B cell (primary cell): ENCODE measurements at regions of chr16 and their contacts with region 1.

Region 1: DNA sequence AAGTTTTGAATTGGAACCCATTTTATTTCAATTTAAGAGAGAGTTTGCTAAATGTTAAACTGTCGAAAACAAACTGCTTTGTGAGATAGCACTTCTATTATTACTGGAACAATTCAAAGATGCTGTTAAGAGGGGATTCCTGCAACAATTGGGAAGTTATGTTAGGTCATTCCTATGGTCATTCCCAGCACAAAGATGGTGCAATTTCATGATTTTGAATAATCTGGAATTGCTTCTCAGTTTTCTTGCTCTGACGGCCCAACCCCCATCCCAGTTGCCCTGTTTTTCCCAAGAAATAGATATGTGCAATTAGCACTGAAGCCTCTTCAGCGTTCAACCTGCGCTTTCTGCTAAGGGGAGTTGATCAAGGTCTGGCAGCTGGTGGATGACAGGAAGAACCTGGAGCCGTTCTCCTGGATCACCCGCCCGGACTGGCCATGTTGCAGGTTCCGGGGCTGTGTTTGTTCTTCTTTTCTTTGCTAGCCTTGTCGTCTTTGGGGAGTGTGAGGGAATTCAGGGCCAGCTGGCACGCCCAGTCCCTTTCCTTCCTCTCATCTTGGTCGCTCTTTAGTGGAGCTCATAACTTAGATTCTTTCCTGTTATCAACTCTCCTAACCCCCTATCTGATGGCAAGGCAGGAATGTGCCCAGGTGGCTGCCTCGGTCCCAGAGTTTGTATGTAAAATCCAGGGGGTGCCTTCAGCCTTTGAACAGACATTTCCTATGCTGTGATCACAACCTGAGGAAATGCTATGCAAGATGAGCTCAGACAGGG is 29.0 kb upstream of the IRF8 start:
- DNase-seq: no peak
- ATAC-seq: no peak
- H3K4me3 ChIP-seq: peak overlapping the region in 2 of 5 experiments; percentile 3 to 28
- H3K4me3 Mint-ChIP-seq: peak overlapping the region; percentile 59
- H3K27ac ChIP-seq: peak overlapping the region; percentile 33 to 74
- H3K27ac Mint-ChIP-seq: peak overlapping the region; percentile 84
- H3K4me1 ChIP-seq: peaks cover 53 to 66% of the 10 kb centered on the region in 2 donors
- H3K4me1 Mint-ChIP-seq: peaks cover 78% of the 10 kb centered on the region
- H3K27me3 ChIP-seq: no peaks in the 10 kb centered on the region
- H3K27me3 Mint-ChIP-seq: no peaks in the 10 kb centered on the region
- CTCF ChIP-seq: no peak

Region 2: DNA sequence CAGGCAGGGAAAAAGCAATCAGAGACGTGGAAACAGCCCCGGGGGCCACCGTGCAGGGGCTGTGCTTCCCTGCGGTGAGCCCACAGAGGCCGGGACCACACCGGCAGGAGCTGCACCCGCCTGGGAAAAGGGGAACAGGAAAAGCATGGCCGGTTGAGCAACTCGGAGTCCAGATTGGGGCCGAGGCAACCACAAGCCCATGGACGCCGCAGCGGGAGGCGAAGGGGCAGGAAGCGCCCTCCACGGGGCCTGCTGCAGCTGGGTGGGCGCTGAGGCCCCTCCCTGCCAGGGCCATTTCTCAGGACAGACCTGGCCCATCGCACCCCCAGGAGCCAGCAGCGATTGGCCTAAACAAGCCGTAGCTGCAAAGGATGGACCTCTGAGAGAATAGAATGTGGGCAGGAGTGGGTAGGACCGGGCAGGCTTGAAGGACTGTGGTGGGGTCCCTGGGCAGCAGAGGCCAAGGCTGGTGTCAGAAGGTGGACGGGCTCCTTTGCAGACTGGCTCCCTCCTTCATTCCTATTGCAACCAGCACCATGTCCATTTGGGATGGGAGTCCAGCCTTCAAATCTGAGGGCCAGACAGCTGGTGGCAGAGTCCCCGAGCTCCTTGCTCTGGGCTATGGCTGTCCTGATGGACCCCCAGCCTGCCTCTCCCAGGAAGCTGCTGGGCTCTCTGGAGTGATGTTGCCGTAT is 40.1 kb before region 1 on chr16:
- CTCF ChIA-PET with region 1: interaction called, 7 read pairs
- POLR2A ChIA-PET with region 1: interaction called, 7 read pairs
- intact Hi-C with region 1: loop called (anchors 1 kb)
- DNase-seq: peak; percentile 42
- ATAC-seq: no peak
- H3K4me3 ChIP-seq: peak overlapping the region in 4 of 5 experiments; percentile 11 to 28 (median 16)
- H3K4me3 Mint-ChIP-seq: peak overlapping the region; percentile 70
- H3K27ac ChIP-seq: peak overlapping the region; percentile 55 to 58
- H3K27ac Mint-ChIP-seq: peak overlapping the region; percentile 84
- H3K4me1 ChIP-seq: peaks cover 50 to 51% of the 10 kb centered on the region in 2 donors
- H3K4me1 Mint-ChIP-seq: peaks cover 64% of the 10 kb centered on the region
- H3K27me3 ChIP-seq: peaks cover 0 to 6% (median 0%) of the 10 kb centered on the region in 4 experiments
- H3K27me3 Mint-ChIP-seq: no peaks in the 10 kb centered on the region
- CTCF ChIP-seq: no peak

Region 3: GRCh38 chr16:85853547-85854545 is 16.1 kb before region 1 on chr16:
- CTCF ChIA-PET with region 1: interaction called, 4 read pairs
- POLR2A ChIA-PET with region 1: interaction called, 3 read pairs
- intact Hi-C with region 1: loop called (anchors 2 kb)
- DNase-seq: no peak
- ATAC-seq: peak; percentile 14
- H3K4me3 ChIP-seq: no peak overlapping the region
- H3K4me3 Mint-ChIP-seq: no peak overlapping the region
- H3K27ac ChIP-seq: no peak overlapping the region
- H3K27ac Mint-ChIP-seq: no peak overlapping the region
- H3K4me1 ChIP-seq: peaks cover 13 to 16% of the 10 kb centered on the region in 2 donors
- H3K4me1 Mint-ChIP-seq: peaks cover 31% of the 10 kb centered on the region
- H3K27me3 ChIP-seq: no peaks in the 10 kb centered on the region
- H3K27me3 Mint-ChIP-seq: no peaks in the 10 kb centered on the region
- CTCF ChIP-seq: no peak

Region 4: DNA sequence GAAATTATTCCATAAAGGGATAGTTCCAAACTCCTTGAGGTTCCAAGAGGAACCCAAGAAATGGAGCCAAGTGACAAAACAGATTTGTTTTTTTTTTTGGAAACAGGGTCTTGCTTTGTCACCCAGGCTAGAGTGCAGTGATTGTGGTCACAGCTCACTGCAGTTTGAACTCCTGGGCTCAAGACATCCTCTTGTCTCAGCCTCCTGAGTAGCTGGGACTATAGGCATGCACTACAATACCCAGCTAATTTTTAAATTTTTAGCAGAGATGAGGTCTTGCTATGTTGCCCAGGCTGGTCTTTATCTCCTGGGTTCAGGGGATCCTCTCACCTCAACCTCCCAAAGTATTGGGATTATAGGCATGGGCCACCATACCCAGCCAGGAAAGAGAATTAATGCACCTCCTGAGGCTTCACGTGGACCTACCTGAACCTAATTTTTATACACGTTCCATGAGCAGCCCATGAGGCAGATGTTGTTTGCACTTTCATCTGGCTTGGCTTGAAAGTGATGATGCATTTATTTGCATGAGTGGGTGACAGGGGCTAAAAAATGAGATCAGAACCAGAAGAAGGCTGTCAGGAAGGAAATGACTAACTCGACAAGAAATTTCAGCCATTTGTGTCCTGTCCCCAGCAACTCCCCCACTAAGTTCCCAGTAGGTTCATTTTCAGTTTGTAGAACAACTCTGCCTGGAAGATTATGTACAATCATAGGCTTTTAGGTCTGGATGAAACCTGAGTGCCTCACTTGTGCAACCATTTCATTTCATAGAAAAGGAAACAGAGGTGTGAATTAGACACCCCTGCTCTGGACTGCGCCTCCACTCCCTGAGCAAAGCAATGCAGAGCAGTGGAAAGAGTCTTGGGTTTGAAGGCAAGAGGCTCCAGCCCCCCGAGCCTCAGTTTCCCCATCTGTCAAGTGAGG is 18.7 kb after region 1 on chr16:
- CTCF ChIA-PET with region 1: interaction called, 5 read pairs
- POLR2A ChIA-PET with region 1: interaction called, 8 read pairs
- intact Hi-C with region 1: loop called (anchors 1 kb)
- DNase-seq: peak; percentile 83
- ATAC-seq: peak; percentile 82
- H3K4me3 ChIP-seq: peak overlapping the region in 2 of 5 experiments; percentile 13 to 16
- H3K4me3 Mint-ChIP-seq: peak overlapping the region; percentile 39
- H3K27ac ChIP-seq: peak overlapping the region; percentile 64 to 65
- H3K27ac Mint-ChIP-seq: peak overlapping the region; percentile 82
- H3K4me1 ChIP-seq: peaks cover 20 to 23% of the 10 kb centered on the region in 2 donors
- H3K4me1 Mint-ChIP-seq: peaks cover 46% of the 10 kb centered on the region
- H3K27me3 ChIP-seq: no peaks in the 10 kb centered on the region
- H3K27me3 Mint-ChIP-seq: no peaks in the 10 kb centered on the region
- CTCF ChIP-seq: no peak

Region 5: DNA sequence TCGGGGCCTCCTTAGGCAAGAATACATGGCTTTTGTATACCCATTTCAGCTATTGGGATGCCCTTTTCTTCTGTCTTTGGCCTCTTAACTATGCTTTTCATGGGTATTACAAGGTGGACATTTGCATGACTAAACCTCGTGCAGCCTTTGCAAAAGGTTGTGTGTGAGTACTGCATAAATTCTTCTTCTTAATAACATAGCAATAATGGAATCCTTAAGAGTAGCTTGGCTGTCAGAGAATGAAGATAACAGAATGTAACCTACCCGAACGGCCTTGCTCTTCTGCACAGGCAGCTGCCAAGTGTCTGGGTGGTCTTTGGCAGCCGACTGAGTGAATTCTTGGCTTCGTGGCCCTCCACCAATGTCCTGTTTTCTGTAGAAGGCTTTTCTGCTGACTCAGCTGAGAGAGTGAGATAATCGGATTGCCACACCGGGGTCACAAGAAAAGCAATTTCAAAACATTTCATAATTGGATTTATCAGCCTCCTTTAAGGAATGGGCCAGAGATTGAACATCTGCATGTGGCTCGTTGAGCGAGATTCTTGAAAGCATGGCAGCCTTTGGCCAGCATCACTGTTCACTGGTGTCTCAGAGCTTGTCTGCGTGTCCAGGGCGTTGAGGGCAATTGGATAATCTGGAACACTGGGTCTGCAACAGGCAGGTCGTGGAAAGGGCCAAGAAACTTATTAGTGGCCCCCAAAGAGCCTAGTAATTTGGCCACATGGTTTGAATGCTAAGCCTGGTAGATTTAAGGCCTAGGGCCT is 42.4 kb after region 1 on chr16:
- CTCF ChIA-PET with region 1: no interaction called
- POLR2A ChIA-PET with region 1: no interaction called
- intact Hi-C with region 1: no loop called
- DNase-seq: no peak
- ATAC-seq: no peak
- H3K4me3 ChIP-seq: no peak overlapping the region
- H3K4me3 Mint-ChIP-seq: peak overlapping the region; percentile 41
- H3K27ac ChIP-seq: peak overlapping the region in 1 of 2 donors; percentile 82
- H3K27ac Mint-ChIP-seq: peak overlapping the region; percentile 92
- H3K4me1 ChIP-seq: peaks cover 97 to 100% of the 10 kb centered on the region in 2 donors
- H3K4me1 Mint-ChIP-seq: peaks cover 92% of the 10 kb centered on the region
- H3K27me3 ChIP-seq: no peaks in the 10 kb centered on the region
- H3K27me3 Mint-ChIP-seq: no peaks in the 10 kb centered on the region
- CTCF ChIP-seq: no peak